ENCODE measurements at regions of chr11 and their contacts with region 1.

Region 1: DNA sequence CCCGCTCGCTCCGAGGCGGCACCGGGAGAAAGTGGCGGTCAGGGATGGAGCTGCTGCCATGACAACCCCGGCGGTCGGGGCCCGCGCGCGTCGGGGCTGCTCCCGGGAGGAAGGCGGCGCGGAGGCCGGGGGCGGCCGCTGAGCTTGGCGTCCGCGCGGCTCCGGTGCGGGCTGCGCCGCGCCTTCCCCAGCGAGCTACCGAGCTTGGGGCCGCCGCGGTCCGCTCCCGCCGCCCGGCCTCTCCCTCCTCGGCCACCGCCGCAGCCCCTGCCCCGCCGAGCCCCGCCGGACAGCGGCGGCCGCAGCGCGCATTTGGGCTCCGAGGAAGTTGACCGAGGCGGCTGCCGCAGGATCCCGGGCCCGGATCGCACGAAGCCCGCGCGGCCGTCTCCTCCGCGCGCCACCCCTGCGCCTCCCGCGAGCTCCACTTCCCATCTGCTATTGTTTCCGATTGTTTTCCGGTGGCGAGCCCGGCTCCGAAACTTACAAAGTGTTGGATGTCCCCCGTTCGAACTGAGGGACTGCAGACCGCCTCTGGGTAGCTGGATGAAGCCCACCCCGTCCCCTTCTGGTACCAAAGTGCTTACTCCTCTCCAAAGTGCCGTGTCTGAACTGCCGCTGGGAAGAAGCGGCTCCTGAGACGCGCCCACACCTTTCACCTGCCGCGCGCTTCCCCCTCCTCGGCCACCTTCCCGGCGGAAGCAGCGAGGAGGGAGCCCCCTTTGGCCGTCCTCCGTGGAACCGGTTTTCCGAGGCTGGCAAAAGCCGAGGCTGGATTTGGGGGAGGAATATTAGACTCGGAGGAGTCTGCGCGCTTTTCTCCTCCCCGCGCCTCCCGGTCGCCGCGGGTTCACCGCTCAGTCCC is 540.3 kb downstream of the NTM start:
- DNase-seq: peak in 2 of 3 donors; percentile 71 to 74
- ATAC-seq: peak; percentile 38 to 49
- H3K4me3 ChIP-seq: peak overlapping the region; percentile 61
- H3K27ac ChIP-seq: peak overlapping the region; percentile 50
- H3K4me1 ChIP-seq: peaks cover 3% of the 10 kb centered on the region
- H3K27me3 ChIP-seq: no peaks in the 10 kb centered on the region

Region 2: DNA sequence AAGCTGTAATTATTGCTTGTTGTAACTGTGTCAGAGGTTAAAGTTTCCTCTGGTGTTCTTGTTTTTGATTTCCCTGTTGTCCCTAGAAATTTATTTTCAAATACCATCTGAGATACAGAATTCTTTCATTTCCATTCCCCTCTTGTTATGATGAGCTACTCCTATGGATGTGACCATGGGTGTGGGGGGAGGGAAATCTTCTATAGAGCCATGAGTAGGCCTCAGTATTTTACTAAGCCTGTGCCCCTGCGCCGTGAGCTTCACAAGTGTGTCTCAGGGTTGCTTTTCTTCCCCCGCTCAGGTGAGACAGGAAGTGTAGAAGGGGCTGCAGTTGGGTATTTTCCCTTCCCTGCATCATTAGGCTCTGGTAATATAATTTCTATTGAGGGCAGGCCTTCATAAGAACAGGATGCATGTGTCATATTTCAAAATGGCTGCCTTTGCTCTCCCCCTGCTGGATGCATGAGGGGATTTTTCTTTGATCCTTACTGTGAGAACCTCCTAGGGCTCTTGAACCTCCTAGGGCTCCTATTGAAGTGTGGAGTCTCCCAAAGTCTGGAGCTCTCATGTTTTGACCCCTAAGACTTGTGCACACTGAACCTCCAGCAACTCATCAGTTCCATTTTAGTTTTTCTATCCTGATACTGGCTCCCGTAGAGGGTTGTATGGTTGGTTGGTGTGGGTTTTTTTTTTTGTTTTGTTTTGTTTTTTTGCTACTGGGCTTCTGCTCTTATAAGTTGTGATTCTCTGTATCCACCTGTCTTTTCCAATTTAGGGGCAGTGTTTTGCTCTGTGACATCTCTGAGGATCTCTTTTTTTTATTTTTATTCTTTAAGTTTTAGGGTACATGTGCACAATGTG is 117.9 kb after region 1 on chr11:
- intact Hi-C with region 1: loop called (anchors 5 to 10 kb)
- DNase-seq: peak; percentile 23 to 62 (median 42)
- ATAC-seq: peak; percentile 66 to 72
- H3K4me3 ChIP-seq: no peak overlapping the region
- H3K27ac ChIP-seq: peak overlapping the region; percentile 33
- H3K4me1 ChIP-seq: no peaks in the 10 kb centered on the region
- H3K27me3 ChIP-seq: no peaks in the 10 kb centered on the region

Region 3: DNA sequence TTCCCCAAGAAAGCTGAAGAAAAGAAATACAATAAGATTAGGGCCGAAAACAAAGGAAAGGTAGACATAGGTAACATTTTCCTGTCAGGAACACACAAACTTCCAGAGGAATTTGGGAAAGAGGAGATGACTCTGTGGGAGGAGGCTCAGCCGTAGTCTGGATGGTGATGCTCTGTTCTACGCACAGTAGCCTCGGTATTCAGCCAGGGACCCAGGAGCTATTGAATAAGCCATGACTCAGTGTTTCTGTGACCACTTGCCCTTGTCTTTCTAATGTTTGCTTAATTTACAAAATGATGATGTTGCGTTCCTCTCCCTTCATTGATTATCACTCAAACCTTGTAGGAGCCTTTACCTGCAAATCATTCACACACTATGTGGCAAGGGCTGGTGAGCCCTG is 204.7 kb after region 1 on chr11:
- intact Hi-C with region 1: loop called in 1 of 4 experiments (anchors 5 kb)
- DNase-seq: no peak
- ATAC-seq: no peak
- H3K4me3 ChIP-seq: no peak overlapping the region
- H3K27ac ChIP-seq: no peak overlapping the region
- H3K4me1 ChIP-seq: peaks cover 7% of the 10 kb centered on the region
- H3K27me3 ChIP-seq: no peaks in the 10 kb centered on the region

Region 4: GRCh38 chr11:132312701-132313111 is 402.0 kb after region 1 on chr11:
- intact Hi-C with region 1: loop called in 1 of 4 experiments (anchors 10 kb)
- DNase-seq: no peak
- ATAC-seq: peak in 1 of 2 donors; percentile 28
- H3K4me3 ChIP-seq: no peak overlapping the region
- H3K27ac ChIP-seq: no peak overlapping the region
- H3K4me1 ChIP-seq: no peaks in the 10 kb centered on the region
- H3K27me3 ChIP-seq: no peaks in the 10 kb centered on the region